Natural killer cell (primary cell): ENCODE measurements at regions of chr20 and their contacts with region 1.

Region 1: DNA sequence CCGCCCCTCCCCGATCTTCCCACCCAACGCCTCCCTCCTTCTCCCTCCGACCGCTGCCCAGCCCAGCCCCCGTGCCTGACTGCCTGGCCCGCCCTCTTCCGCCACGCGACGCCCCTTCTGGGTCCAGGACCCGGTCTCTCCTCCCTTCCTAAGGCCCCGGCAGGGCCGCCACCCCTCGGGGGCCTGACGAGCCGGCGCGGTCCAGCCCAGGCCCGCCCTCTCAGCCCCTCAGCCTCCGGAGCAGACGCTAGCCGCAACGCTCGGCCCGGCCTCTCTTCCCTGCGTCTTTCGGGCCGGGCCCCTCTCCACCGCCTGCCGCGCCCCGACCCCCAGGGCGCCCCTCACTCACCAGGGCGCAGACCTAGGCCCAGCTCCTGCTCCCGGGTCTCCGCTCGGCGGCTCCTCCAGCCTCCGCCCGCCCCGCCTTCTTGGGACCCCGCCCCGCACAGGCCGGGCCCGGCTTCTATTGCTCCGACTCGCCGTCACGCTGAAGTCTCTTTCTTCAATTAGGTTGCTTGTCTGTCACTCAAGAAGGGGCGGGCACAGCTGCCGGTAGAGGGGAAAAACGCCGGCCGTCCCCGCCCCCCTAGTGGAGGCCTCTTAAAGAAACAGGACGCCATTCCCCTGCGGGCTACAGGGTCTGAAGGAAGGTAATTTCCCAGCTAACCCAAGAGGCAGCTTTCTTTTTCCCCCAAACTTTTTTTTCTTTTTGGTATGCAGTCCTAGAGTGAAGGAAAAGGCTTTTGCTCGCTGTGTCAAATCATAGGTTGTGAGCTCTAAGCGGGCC is at the start of gene ELMO2:
- DNase-seq: peak; percentile 92 to 97
- ATAC-seq: peak; percentile 84 to 95 (median 87)
- H3K4me3 ChIP-seq: peak within 1 kb of the TSS; percentile 78
- H3K4me3 Mint-ChIP-seq: peak within 1 kb of the TSS; percentile 93
- H3K27ac ChIP-seq: peak within 1 kb of the TSS; percentile 87
- H3K27ac Mint-ChIP-seq: peak within 1 kb of the TSS; percentile 97 to 98
- H3K4me1 ChIP-seq: peaks cover 58% of the 10 kb centered on the region
- H3K4me1 Mint-ChIP-seq: peaks cover 60 to 74% of the 10 kb centered on the region in 2 donors
- H3K27me3 ChIP-seq: no peaks in the 10 kb centered on the region
- H3K27me3 Mint-ChIP-seq: no peaks in the 10 kb centered on the region
- CTCF ChIP-seq: no peak
- total RNA-seq, gene ELMO2: 108 to 156 (median 142) TPM

Region 2: DNA sequence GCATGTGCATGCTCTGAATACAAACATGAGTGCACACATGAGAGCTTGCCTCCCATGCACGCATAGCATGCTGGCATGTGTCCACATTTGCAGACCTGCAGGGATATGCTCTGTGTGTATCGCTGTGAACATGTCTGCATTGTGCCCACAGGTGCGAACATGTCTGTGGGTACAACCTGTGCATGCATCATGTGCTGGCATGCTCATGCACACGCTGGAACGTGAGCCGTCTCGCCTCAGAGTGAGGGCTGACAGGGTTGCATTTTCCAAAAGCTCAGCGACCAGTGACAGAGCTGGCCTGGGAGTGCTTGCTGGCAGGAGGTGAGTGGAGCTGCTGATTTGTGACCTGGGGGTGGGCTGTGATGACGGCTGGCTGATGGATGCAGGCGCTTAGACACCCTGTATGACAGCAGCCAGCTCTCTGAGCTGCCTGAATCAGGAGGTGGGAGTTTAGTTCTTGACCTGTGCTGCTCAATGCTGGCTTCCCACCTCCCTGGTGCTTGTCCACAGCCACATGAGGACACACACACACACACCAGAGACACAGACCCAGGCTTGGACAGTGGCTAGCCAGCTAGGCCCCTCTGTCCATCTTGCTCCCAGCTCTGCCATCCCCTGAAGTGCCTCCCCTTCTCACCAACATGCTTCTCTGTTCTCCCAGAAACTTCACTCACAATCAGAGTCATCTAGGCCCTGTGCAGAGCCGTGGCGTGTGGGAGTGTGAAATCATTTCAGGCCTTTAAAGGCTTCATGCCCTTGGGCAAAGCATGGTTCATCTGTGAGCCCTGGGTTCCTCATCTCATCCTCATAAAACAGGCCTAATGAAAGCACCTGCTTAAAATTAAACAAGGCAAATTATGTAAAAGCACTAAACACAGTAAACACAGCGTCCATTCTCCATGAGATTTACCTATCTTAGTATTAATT is 236.9 kb before region 1 on chr20:
- intact Hi-C with region 1: no loop called
- DNase-seq: no peak
- ATAC-seq: no peak
- H3K4me3 ChIP-seq: no peak overlapping the region
- H3K4me3 Mint-ChIP-seq: no peak overlapping the region
- H3K27ac ChIP-seq: no peak overlapping the region
- H3K27ac Mint-ChIP-seq: no peak overlapping the region
- H3K4me1 ChIP-seq: no peaks in the 10 kb centered on the region
- H3K4me1 Mint-ChIP-seq: no peaks in the 10 kb centered on the region
- H3K27me3 ChIP-seq: peaks cover 7% of the 10 kb centered on the region
- H3K27me3 Mint-ChIP-seq: peaks cover 31 to 38% of the 10 kb centered on the region in 2 donors
- CTCF ChIP-seq: no peak

Region 3: DNA sequence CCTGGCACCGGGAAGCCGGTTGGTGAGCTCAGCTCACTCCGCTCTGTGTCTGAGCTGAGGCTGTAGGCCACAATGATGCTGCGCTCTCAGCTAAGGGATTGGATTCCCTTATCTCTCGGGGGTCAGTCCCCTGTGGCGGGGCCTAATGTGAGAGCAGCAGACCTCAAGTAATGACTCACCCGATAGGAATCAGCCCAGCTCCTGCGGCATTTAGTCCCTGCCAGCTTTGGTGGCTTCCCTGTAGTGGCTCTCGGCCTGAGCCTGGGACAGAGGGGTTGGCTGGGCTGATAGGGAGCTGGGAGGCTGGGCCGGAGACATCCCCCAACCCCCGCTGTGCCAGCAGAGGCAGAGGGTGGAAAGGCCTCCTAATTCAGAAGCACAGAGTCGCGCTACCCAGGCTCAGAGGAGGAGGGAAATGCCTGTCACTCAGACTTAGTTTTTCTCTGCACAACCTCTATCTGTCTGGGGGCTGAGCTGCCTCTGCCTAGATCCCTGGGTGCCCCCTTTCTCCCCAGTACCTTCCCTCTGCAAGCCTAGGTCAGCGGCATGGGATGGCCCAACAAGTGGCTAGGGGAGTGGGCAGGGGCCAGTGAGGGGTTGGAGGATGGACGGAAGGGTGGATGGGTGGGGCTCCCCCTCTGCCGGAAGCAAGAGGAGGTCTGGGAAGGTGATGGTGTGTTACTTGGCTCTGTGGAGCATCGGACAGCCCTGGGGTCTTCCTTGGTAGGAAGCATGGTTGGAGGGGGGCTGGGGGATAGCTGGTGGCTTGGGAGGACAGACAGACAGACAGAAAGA is 190.3 kb before region 1 on chr20:
- intact Hi-C with region 1: no loop called
- DNase-seq: no peak
- ATAC-seq: no peak
- H3K4me3 ChIP-seq: no peak overlapping the region
- H3K4me3 Mint-ChIP-seq: no peak overlapping the region
- H3K27ac ChIP-seq: no peak overlapping the region
- H3K27ac Mint-ChIP-seq: no peak overlapping the region
- H3K4me1 ChIP-seq: no peaks in the 10 kb centered on the region
- H3K4me1 Mint-ChIP-seq: no peaks in the 10 kb centered on the region
- H3K27me3 ChIP-seq: no peaks in the 10 kb centered on the region
- H3K27me3 Mint-ChIP-seq: peaks cover 15 to 21% of the 10 kb centered on the region in 2 donors
- CTCF ChIP-seq: no peak

Region 4: DNA sequence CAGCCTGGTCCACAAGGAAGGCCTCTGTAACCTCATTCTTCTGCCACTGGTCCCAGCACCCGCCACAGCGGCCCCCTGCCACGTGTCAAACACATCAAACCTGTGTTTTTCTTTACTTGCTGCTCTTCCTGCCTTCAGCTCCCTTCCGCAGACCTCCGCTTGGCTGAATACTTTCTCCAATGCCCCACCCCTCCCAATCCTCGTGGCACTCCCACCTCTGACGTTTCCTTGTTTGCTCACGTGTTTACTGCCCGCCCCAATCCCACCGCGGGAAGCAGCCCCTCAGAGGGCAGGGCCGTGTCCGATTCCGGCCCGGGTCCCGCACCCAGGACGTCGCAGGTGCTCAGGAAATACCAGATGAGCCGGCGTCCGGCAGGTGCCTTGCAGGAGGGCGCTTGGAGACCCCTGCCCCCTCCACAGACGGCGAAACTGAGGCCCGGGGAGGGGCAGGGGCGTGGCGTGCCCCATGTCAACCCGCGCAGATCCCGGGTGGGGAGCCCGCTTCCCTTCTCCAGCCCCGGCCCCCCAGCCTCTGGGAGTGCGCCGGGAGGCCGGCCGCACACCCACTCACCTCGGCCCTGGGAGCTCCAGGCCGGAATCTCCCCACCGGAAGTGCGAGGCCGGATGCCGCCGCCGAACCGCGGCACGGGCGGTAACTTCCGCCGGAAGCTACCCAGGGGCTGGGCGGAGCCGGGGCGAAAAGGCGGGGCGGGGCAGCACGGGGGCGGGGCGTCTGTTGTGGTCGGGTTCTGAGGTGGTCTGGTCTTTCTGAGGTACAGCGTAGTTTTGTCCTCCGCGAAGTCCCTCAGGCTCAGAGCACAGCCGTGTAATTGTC is 42.4 kb before region 1 on chr20:
- intact Hi-C with region 1: loop called (anchors 1 kb)
- DNase-seq: peak; percentile 80 to 94
- ATAC-seq: peak; percentile 87 to 90 (median 89)
- H3K4me3 ChIP-seq: peak overlapping the region; percentile 99
- H3K4me3 Mint-ChIP-seq: peak overlapping the region; percentile 92
- H3K27ac ChIP-seq: peak overlapping the region; percentile 100
- H3K27ac Mint-ChIP-seq: peak overlapping the region; percentile 86 to 92
- H3K4me1 ChIP-seq: peaks cover 54% of the 10 kb centered on the region
- H3K4me1 Mint-ChIP-seq: peaks cover 47 to 53% of the 10 kb centered on the region in 2 donors
- H3K27me3 ChIP-seq: no peaks in the 10 kb centered on the region
- H3K27me3 Mint-ChIP-seq: no peaks in the 10 kb centered on the region
- CTCF ChIP-seq: no peak